ENCODE measurements at regions of chr1 and their contacts with region 1.

Region 1: GRCh38 chr1:11012250-11013171 is at the start of gene TARDBP:
- H3K4me3 Mint-ChIP-seq: peak within 1 kb of the TSS; percentile 83
- H3K27ac Mint-ChIP-seq: peak within 1 kb of the TSS; percentile 99
- H3K4me1 Mint-ChIP-seq: peaks cover 17% of the 10 kb centered on the region
- H3K27me3 Mint-ChIP-seq: no peaks in the 10 kb centered on the region

Region 2: DNA sequence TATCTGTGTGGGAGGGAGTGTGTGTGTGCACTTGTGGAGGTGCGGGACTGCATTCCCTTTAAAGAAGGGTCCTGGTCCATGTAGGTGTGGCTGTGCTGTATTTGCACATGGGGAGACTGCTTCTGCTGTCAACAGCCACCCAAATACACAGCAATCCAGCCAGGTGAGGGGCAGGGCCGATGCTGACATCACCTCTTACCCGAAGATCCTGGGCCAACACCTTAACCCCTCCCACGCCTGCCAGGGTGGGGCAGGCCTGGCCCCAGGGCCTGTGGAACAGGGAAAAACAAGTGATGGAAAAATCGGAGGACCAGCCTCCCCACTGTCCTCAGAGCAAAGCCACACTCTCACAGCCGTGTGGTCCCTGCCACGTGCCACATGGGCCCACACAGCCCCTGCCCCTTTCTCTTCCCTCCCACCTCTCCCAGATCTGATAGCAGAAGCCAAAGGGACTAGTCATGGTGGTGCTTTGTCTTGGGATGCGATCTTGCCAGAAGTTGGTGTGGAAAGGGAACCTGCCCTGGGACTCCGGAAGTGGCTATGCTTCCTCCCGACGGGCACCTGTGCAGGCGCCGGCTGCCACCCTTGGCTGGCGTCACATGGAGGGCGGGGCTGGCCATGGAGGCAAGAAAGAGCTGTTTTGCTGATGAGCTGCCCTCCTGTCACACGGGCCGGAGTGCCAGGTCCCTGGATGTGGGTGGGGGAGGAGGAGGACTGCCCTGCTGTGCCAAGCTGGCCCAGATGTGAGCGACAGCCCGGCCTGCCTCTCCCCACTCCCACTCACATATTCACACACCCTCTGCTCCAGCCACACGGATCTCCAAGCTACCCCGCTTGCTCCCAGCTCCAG is 208.3 kb before region 1 on chr1:
- intact Hi-C with region 1: no loop called
- H3K4me3 Mint-ChIP-seq: no peak overlapping the region
- H3K27ac Mint-ChIP-seq: no peak overlapping the region
- H3K4me1 Mint-ChIP-seq: no peaks in the 10 kb centered on the region
- H3K27me3 Mint-ChIP-seq: peaks cover 50% of the 10 kb centered on the region

Region 3: GRCh38 chr1:10965546-10966226 is 46.8 kb before region 1 on chr1:
- intact Hi-C with region 1: loop called (anchors 5 kb)
- H3K4me3 Mint-ChIP-seq: peak overlapping the region; percentile 65
- H3K27ac Mint-ChIP-seq: peak overlapping the region; percentile 92
- H3K4me1 Mint-ChIP-seq: peaks cover 80% of the 10 kb centered on the region
- H3K27me3 Mint-ChIP-seq: no peaks in the 10 kb centered on the region

Region 4: GRCh38 chr1:11099310-11100149 is 87.0 kb after region 1 on chr1 and contains the start of gene EXOSC10:
- intact Hi-C with region 1: loop called (anchors 2 kb)
- H3K4me3 Mint-ChIP-seq: peak within 1 kb of the TSS; percentile 95
- H3K27ac Mint-ChIP-seq: peak within 1 kb of the TSS; percentile 94
- H3K4me1 Mint-ChIP-seq: peaks cover 8% of the 10 kb centered on the region
- H3K27me3 Mint-ChIP-seq: no peaks in the 10 kb centered on the region

Region 5: DNA sequence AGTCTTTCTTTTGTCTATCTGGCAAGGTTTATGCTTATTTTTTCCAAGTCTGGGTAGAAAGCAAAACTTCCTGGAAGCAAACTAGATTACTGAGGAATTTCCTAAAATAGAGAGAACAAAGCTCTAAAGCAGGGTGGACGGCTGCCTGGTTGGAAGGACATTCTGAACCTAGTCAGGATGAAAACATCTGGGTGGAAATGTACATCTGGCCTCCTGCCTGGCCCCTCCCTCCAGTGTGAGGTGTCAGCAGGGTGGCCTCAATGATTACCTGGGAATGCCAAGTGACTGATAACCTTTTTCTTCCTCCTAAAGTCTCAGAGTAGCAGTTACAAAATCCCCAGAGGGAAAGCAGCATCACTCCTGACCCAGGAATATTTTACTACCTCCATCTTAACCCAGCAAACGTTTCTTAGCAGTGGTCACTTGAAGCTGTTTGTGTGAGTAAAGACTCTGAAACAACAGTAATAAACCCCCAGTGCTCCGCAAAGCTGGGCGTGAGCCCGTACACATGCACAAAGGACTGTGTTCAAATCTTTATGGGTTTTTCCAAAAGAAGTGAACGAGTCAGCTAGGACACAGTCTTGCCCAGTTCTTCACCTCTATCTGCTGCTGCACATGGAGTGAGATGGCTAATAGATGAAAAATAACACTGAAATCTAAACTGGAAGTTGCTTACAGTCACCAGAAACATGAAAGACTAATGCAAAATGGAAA is 195.5 kb after region 1 on chr1:
- intact Hi-C with region 1: no loop called
- H3K4me3 Mint-ChIP-seq: no peak overlapping the region
- H3K27ac Mint-ChIP-seq: no peak overlapping the region
- H3K4me1 Mint-ChIP-seq: no peaks in the 10 kb centered on the region
- H3K27me3 Mint-ChIP-seq: no peaks in the 10 kb centered on the region

Measured in dendritic cell treated with granulocyte-macrophage colony-stimulating factor and Interleukin-4, amounts not matched to agents 40 ng/mL and 50 ng/mL, for 4 days (primary cell).